Gastrocnemius medialis (tissue), 4 donors: ENCODE measurements at regions of chr3 and their contacts with region 1.

Region 1: DNA sequence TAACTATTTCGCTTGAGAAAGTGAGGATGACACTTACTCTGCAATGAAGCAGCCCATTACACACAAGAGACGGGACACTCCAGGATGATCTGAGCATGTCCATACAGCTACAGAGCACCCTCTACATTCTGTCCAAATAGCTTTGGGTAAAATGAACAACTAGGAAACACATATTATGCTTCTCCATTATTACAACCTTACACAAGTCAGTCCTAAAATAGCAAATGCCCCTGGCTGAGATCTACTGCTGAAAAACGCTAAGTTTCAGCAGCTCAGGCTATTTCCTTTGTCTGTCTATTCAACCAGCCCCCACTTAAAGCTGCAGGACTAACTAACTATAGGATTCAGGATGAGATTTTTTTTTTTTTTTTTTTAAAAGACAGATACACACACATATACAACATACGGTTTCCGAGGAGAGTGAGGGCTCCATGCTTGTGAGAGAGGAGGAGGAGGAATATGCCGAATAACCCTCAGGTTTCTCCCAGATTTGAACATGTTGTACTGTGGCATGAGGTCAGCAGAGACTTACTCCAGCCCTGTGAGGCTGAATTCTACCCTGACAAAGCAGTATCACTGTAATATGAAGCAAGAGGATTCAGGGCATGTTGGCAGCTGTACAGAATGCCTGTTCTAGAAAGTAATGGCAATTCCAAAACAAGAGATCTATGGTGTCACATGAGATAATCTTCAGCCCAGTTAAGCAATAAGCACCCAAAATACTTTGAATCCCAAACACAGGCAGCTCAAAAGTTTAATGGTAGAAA is 117.3 kb upstream of the PLXND1 start:
- DNase-seq: peak; percentile 85 to 87
- ATAC-seq: peak; percentile 99
- H3K4me3 ChIP-seq: peak overlapping the region; percentile 49 to 60 (median 52)
- H3K27ac ChIP-seq: peak overlapping the region; percentile 82 to 92 (median 84)
- H3K4me1 ChIP-seq: peaks cover 48 to 51% of the 10 kb centered on the region in 2 donors
- H3K27me3 ChIP-seq: no peaks in the 10 kb centered on the region
- CTCF ChIP-seq: no peak
- POLR2A ChIP-seq: peak in 1 of 2 donors; percentile 58

Region 2: DNA sequence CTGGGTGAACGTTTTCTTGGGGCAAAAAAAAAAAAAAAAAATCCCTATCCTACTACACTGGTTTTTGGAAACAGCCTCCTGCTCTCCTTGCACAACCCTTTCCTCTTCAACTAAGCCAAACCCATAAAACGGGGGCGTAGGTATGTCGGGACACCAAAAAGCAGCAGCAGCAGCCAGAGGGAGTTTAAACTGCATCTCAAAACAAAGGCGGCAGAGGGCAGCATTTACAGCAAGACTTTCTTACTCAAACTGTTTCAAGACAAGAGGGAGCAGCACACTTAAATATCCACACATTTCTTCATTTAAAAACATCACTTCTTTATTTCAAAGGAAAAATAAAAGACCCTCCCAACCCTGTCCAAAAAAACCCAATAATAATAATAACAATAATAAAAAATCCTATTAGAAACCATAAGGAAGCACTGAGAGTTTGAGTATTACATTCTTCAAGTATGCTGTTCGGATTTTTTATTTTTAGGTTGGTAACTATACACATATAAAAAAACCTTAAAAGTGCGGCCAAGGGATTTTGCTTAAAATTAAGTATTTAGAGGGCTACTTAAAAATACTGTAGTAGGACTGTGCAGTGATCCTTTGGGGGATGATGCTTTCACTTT is 73.4 kb before region 1 on chr3:
- in situ Hi-C with region 1: loop called in 1 of 4 experiments (anchors 10 kb)
- intact Hi-C with region 1: no loop called
- DNase-seq: peak; percentile 35 to 71
- ATAC-seq: peak; percentile 46 to 70
- H3K4me3 ChIP-seq: no peak overlapping the region
- H3K27ac ChIP-seq: peak overlapping the region in 1 of 4 donors; percentile 9
- H3K4me1 ChIP-seq: peaks cover 26 to 35% of the 10 kb centered on the region in 2 donors
- H3K27me3 ChIP-seq: no peaks in the 10 kb centered on the region
- CTCF ChIP-seq: peak; percentile 51 to 81 (median 71)
- POLR2A ChIP-seq: no peak

Region 3: DNA sequence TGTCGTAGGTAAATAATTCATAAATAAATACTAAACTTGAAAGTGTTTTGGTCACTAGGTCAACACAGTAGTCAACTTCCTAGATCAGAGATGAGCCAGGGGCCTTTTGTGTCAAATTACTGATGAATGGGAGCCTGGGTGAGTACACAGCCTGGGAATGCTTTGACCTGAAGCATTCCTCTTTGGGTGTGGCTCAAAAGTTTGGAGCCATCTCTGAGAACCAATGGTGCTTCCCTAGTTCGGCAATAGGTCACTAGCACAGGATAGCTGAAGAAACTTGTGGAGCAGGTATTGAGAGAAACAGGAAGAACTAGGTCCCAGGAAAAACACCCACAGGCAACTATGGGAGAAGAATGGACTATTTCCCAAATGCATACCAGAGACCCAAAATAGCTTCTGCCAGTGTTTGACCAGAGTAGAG is 60.7 kb before region 1 on chr3:
- in situ Hi-C with region 1: loop called in 2 of 4 experiments (anchors 10 kb)
- intact Hi-C with region 1: loop called (anchors 2 kb)
- DNase-seq: peak in 1 of 2 donors; percentile 34
- ATAC-seq: peak; percentile 4 to 34
- H3K4me3 ChIP-seq: peak overlapping the region in 2 of 4 donors; percentile 2 to 28
- H3K27ac ChIP-seq: peak overlapping the region; percentile 87 to 97 (median 92)
- H3K4me1 ChIP-seq: peaks cover 65 to 73% of the 10 kb centered on the region in 2 donors
- H3K27me3 ChIP-seq: no peaks in the 10 kb centered on the region
- CTCF ChIP-seq: no peak
- POLR2A ChIP-seq: no peak

Region 4: DNA sequence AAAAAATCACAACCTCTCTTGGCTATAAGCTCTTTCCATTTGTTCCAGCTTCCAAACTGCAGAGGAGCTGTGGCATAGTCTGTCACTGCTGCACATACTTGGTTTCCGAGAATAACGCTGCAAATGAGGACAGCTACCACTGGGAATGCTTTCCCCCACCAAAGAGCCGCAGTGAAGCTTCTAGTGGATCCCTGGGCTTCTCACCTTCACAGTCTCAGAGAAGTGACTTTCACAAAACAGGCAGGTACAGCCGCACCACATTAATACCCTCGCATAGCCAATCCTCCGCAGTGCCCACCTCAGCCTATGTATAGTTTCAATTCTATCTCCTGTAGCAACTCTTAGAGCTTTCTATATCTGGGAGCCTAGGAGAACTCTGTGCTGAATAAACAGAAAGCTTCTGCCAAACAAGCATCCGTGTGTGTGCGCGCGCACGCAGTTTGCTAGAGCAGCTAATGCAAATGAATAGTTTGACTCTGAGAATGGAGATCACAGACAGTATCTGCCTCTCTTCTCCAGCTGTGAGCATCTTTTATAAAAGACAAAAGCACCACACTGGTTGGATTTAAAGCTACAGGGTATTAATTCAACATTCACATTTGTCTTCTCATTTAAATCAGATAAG is 35.4 kb before region 1 on chr3:
- in situ Hi-C with region 1: no loop called
- intact Hi-C with region 1: loop called (anchors 5 kb)
- DNase-seq: peak; percentile 51 to 65
- ATAC-seq: peak; percentile 64 to 74
- H3K4me3 ChIP-seq: peak overlapping the region; percentile 38 to 50 (median 42)
- H3K27ac ChIP-seq: peak overlapping the region; percentile 75 to 88 (median 86)
- H3K4me1 ChIP-seq: peaks cover 63 to 73% of the 10 kb centered on the region in 2 donors
- H3K27me3 ChIP-seq: no peaks in the 10 kb centered on the region
- CTCF ChIP-seq: peak in 1 of 5 experiments; percentile 12
- POLR2A ChIP-seq: no peak

Region 5: DNA sequence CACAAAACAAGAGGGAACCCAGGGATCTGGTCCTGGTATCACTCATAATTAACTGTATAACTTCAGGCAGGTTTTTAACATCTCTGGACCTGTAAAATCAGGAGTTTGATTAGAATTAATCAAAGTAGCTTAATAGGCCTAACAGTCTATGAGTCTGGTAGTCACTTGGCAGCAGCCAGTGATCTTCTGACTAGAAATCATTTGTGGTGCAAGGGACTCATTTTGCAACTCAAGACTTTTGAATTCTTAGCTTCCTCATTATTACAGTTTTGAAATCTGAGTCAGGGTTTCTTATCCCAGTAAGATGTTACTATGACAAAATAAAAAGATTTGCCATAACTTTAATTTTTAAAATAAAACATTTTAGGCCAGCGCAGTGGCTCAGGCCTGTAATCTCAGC is 98.9 kb after region 1 on chr3:
- in situ Hi-C with region 1: no loop called
- intact Hi-C with region 1: no loop called
- DNase-seq: no peak
- ATAC-seq: no peak
- H3K4me3 ChIP-seq: no peak overlapping the region
- H3K27ac ChIP-seq: peak overlapping the region in 1 of 4 donors; percentile 20
- H3K4me1 ChIP-seq: peaks cover 0 to 3% of the 10 kb centered on the region in 2 donors
- H3K27me3 ChIP-seq: no peaks in the 10 kb centered on the region
- CTCF ChIP-seq: no peak
- POLR2A ChIP-seq: no peak